ENCODE measurements at regions of chr4 and their contacts with region 1.

Region 1: GRCh38 chr4:75696071-75696470 is 22.9 kb upstream of the G3BP2 start:
- DNase-seq: peak; percentile 45
- H3K4me3 Mint-ChIP-seq: no peak overlapping the region
- H3K27ac Mint-ChIP-seq: peak overlapping the region; percentile 57
- H3K4me1 Mint-ChIP-seq: peaks cover 36% of the 10 kb centered on the region
- H3K27me3 Mint-ChIP-seq: no peaks in the 10 kb centered on the region

Region 2: DNA sequence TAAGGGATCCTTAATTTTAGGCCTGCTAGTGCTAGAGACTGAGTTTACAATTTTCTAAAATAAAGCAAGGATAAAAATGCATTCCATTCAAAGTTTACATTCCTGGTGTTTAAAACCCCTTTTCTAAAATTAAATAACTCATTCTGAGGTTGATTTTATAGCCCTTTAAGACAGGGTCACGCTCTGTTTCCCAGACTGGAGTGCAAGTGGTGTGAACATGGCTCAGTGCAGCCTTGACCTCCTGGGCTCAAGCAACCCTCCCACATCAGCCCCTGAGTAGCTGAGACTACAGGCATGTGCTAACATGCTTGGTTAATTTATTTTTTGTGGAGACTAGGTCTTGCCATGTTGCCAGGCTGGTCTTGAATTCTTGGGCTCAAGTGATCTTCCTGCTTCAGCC is 58.9 kb before region 1 on chr4:
- CTCF ChIA-PET with region 1: no interaction called
- POLR2A ChIA-PET with region 1: no interaction called
- DNase-seq: no peak
- H3K4me3 Mint-ChIP-seq: no peak overlapping the region
- H3K27ac Mint-ChIP-seq: no peak overlapping the region
- H3K4me1 Mint-ChIP-seq: no peaks in the 10 kb centered on the region
- H3K27me3 Mint-ChIP-seq: no peaks in the 10 kb centered on the region

Region 3: GRCh38 chr4:75683482-75684155 is 12.5 kb before region 1 on chr4:
- CTCF ChIA-PET with region 1: interaction called, 15 read pairs
- POLR2A ChIA-PET with region 1: no interaction called
- DNase-seq: no peak
- H3K4me3 Mint-ChIP-seq: no peak overlapping the region
- H3K27ac Mint-ChIP-seq: no peak overlapping the region
- H3K4me1 Mint-ChIP-seq: peaks cover 39% of the 10 kb centered on the region
- H3K27me3 Mint-ChIP-seq: no peaks in the 10 kb centered on the region